ENCODE measurements at regions of chr7 and their contacts with region 1.

Region 1: DNA sequence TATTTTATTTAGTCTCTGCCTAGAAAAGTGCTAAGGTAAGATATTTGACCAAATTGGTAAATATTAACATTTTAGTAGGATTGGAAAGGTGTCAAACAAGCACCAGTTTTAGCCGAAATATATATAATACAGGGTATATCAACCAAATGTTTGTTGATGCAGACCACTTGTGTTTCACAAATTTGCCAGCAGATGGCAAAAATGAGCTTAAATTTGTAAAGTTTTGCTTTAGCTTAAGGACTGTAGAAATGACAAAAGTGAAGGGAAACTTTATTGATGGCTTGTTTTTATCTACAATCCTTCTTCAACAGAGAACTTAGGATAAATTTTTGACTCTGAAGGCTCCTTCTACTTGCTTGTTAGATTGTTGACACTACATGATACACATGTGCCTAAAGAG is 4.8 kb upstream of the POLR1F start:
- DNase-seq: no peak
- H3K4me3 ChIP-seq: no peak overlapping the region
- H3K27ac ChIP-seq: no peak overlapping the region
- H3K4me1 ChIP-seq: peaks cover 0 to 9% (median 4%) of the 10 kb centered on the region in 3 donors
- H3K27me3 ChIP-seq: no peaks in the 10 kb centered on the region
- CTCF ChIP-seq: peak; percentile 34 to 52 (median 44)
- POLR2A ChIP-seq: no peak

Region 2: GRCh38 chr7:19772841-19773760 is 59.4 kb after region 1 on chr7 and contains the start of gene TMEM196:
- intact Hi-C with region 1: no loop called
- DNase-seq: no peak
- H3K4me3 ChIP-seq: peak within 1 kb of the TSS in 3 of 4 donors; percentile 10 to 48 (median 15)
- H3K27ac ChIP-seq: no peak within 1 kb of the TSS
- H3K4me1 ChIP-seq: peaks cover 0 to 16% (median 0%) of the 10 kb centered on the region in 3 donors
- H3K27me3 ChIP-seq: peaks cover 0 to 41% (median 3%) of the 10 kb centered on the region in 4 donors
- CTCF ChIP-seq: no peak
- POLR2A ChIP-seq: no peak
- total RNA-seq, gene TMEM196: not detected

Region 3: DNA sequence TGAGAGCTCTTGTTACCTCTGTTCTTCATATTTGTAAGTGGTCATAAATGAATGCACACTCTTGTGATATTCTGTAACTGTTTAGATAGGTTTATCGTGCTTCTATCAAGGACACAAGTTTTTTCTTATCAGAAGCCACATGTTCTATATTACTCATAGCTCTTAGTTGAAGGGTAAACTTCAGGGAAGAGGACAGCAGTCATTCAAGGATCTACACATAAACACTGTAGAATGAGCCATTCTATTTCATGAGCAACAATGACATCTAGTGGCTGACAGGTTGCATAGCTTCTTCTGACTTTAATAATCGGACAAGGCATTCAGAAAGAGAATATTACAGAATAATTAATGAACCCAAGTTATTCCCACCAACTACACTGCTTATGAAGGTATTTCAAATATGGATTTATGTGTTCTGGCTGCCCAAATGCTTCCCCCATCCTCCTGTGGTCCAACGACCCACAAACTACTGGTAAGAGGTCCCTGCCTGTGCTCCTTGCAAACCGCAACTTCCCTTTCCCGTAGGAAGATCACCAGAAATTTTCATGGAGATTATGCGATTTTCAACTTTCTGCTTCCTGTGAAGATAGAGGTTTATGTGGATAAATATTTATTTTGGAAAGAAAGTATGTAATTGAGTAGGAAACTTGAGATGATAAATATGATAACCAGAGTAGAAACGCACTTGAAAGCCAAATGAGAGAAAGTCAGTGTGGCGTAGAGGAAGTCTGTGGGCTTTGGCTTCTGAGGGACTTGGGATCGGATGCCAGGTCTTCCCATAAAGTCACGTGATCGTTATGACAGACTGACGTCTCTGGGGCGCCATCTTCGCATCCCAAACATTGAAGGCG is 885.0 kb after region 1 on chr7:
- intact Hi-C with region 1: loop called (anchors 10 kb)
- DNase-seq: no peak
- H3K4me3 ChIP-seq: no peak overlapping the region
- H3K27ac ChIP-seq: no peak overlapping the region
- H3K4me1 ChIP-seq: no peaks in the 10 kb centered on the region
- H3K27me3 ChIP-seq: no peaks in the 10 kb centered on the region
- CTCF ChIP-seq: peak; percentile 68 to 81 (median 75)
- POLR2A ChIP-seq: no peak